Ovary (tissue), 10 donors: ENCODE measurements at regions of chr3 and their contacts with region 1.

Region 1: DNA sequence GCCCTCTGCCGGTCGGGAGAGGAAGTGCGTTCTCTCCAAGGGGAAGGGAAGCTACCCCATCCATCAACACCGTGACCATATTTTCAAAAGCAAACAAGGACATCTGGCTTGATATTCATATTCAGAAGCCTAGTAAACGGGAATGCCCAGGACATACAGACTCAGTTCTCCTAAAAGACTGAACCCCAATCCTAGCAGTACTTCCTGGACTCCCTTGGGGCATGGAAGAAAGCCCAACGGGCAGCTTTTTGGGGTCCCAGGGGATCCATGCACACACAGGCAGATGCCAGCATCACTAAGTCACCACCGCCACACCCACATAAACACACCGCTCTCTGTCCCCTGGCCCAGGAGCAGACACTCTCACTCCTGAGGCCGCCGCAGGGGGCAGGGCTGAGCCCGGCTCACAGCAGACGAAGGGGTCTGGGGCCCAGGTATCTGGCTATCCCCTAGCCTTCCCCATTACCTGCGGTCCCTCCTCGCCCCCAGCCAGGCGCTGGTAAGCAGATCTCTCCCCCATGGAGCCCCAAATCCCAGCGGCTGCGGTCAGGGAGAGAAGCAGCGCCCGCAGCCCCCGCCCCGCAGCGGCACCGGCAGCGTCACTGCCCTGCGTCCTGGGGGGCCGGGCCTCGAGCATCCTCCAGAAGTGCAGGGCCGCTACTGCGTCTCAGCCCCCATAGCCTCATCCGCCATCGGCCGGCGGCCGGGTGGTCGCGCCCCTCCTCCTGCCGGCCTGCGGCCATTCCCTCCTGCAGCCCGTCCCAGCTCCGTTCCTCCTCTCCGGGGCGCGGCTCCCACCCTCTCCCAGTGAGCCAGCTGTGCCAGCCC is 13.4 kb downstream of the TNK2 start:
- DNase-seq: peak in 4 of 5 donors; percentile 39 to 64 (median 58)
- H3K4me3 ChIP-seq: peak overlapping the region; percentile 53
- H3K27ac ChIP-seq: peak overlapping the region; percentile 23 to 90
- H3K4me1 ChIP-seq: peaks cover 14% of the 10 kb centered on the region
- H3K27me3 ChIP-seq: no peaks in the 10 kb centered on the region
- CTCF ChIP-seq: peak; percentile 84 to 89 (median 88)
- EP300 ChIP-seq: no peak
- POLR2A ChIP-seq: no peak

Region 2: DNA sequence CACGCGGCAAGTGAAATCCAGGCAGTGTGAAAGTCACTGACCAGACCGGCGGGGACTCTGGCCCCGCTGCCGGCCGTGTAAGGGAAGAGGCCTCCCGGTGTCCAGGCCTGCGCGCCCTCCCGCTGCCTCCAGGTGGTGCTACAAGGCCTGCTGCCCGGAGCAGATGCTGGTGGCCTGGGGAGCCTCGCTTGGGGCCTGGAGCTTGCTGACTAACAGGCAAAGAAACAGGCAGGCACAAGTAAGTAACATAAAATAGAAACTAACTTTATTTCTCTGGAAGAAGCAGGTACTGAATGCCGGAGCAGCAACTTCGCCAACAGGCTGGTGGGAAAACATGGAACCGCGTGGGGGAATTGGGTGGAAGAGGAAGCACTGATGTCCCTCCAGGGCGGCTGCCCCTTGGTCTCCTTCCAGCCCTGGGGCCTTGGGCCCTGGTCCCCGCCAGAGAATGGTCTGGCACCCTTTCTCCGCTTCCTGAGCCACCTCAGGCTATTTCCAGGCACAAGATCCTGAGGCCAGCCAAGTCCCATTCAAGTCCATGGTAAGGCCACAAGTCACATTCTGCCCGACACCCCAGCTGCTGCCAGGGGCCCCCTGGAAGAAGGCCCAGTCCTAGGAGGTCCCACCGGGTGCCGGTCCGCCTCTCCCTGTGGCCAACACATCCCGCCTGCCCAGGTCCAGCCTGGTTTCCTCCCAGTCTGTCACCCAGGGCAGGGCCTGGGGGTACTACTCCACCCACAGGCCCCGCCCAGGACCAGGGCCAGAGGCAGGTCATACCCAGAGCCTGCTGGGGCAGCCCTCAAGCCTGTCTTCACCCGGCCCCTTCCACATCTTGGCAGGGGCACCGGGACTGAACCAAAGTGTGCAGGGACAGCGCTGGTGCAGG is 31.6 kb before region 1 on chr3:
- intact Hi-C with region 1: loop called in 2 of 4 experiments (anchors 1 to 5 kb)
- DNase-seq: peak; percentile 84 to 93 (median 90)
- H3K4me3 ChIP-seq: no peak overlapping the region
- H3K27ac ChIP-seq: no peak overlapping the region
- H3K4me1 ChIP-seq: no peaks in the 10 kb centered on the region
- H3K27me3 ChIP-seq: no peaks in the 10 kb centered on the region
- CTCF ChIP-seq: peak; percentile 80 to 89 (median 86)
- EP300 ChIP-seq: no peak
- POLR2A ChIP-seq: no peak

Region 3: GRCh38 chr3:196336319-196337145 is 441.5 kb after region 1 on chr3:
- intact Hi-C with region 1: no loop called
- DNase-seq: no peak
- H3K4me3 ChIP-seq: no peak overlapping the region
- H3K27ac ChIP-seq: no peak overlapping the region
- H3K4me1 ChIP-seq: no peaks in the 10 kb centered on the region
- H3K27me3 ChIP-seq: no peaks in the 10 kb centered on the region
- CTCF ChIP-seq: no peak
- EP300 ChIP-seq: no peak
- POLR2A ChIP-seq: no peak